Activated naive CD4-positive, alpha-beta T cell treated with anti-CD3 and anti-CD28 coated beads for 36 hours (primary cell): ENCODE measurements at regions of chr12 and their contacts with region 1.

Region 1: GRCh38 chr12:76083904-76084862 is at the start of gene NAP1L1:
- DNase-seq: peak; percentile 97
- H3K4me3 Mint-ChIP-seq: peak within 1 kb of the TSS; percentile 94
- H3K27ac Mint-ChIP-seq: peak within 1 kb of the TSS; percentile 98
- H3K4me1 Mint-ChIP-seq: peaks cover 47% of the 10 kb centered on the region
- H3K27me3 Mint-ChIP-seq: no peaks in the 10 kb centered on the region
- total RNA-seq, gene NAP1L1: 1,078 to 1,092 TPM

Region 2: GRCh38 chr12:74537707-74538385 is 1546.3 kb before region 1 on chr12 and contains the start of gene ATXN7L3B:
- CTCF ChIA-PET with region 1: no interaction called
- intact Hi-C with region 1: loop called (anchors 5 kb)
- DNase-seq: peak; percentile 94
- H3K4me3 Mint-ChIP-seq: peak within 1 kb of the TSS; percentile 91
- H3K27ac Mint-ChIP-seq: peak within 1 kb of the TSS; percentile 97
- H3K4me1 Mint-ChIP-seq: peaks cover 48% of the 10 kb centered on the region
- H3K27me3 Mint-ChIP-seq: no peaks in the 10 kb centered on the region
- total RNA-seq, gene ATXN7L3B: 19.8 to 19.9 TPM

Region 3: GRCh38 chr12:75944097-75944904 is 139.9 kb before region 1 on chr12:
- CTCF ChIA-PET with region 1: no interaction called
- intact Hi-C with region 1: loop called (anchors 2 kb)
- DNase-seq: peak; percentile 44
- H3K4me3 Mint-ChIP-seq: no peak overlapping the region
- H3K27ac Mint-ChIP-seq: peak overlapping the region; percentile 87
- H3K4me1 Mint-ChIP-seq: peaks cover 22% of the 10 kb centered on the region
- H3K27me3 Mint-ChIP-seq: no peaks in the 10 kb centered on the region

Region 4: DNA sequence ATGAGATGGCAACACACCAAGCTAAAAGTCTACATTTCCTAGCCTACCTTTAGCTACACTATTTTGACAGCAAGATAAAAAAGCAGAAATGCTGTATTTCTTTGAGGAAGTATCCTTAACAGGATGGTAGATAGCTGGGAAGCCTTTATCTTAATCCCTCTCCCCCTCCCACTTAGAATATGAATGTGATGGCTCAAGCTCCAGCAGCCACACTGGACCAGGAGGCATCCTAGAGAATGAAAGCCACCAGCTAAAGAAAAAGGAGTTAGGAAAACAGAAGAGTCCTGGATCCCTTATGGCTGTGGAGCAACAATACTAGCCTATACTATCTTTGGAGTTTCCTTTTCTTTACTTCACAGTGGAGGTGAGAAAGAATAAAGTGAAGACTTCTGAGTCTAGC is 14.8 kb before region 1 on chr12:
- CTCF ChIA-PET with region 1: interaction called, 4 read pairs
- intact Hi-C with region 1: loop called (anchors 1 kb)
- DNase-seq: no peak
- H3K4me3 Mint-ChIP-seq: no peak overlapping the region
- H3K27ac Mint-ChIP-seq: peak overlapping the region; percentile 7
- H3K4me1 Mint-ChIP-seq: peaks cover 57% of the 10 kb centered on the region
- H3K27me3 Mint-ChIP-seq: no peaks in the 10 kb centered on the region

Region 5: DNA sequence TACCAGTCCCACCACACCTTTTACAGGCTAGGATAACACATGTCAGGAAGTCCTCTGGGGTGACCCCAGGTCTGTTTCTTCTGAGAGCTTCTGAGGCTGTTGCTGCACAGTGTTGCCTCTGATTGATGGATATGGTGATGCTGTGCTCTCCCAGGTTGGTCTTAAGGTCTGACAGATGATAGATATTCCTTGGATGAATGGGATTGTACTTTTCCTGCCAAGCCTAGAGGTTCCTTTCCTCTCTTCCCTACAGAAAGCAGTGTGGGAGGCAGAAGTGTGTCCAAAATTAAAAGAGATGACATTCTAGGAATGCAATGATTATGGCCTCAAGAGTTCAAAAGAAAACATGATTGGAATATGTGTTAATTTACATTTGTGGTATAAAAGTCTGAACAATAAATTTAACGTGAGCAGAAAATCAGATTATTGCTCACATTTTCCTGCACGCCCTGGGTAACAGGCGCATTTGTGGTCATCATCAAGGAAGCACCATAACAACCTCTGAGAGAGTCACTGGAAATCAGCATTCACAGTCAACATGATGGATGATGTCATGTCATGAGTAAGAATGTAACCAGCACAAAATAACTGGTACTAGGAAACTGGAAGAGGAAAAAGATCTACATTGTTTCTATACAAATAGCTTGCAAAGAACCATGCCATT is 190.4 kb after region 1 on chr12:
- CTCF ChIA-PET with region 1: no interaction called
- intact Hi-C with region 1: loop called (anchors 1 kb)
- DNase-seq: peak; percentile 58
- H3K4me3 Mint-ChIP-seq: no peak overlapping the region
- H3K27ac Mint-ChIP-seq: peak overlapping the region; percentile 10
- H3K4me1 Mint-ChIP-seq: peaks cover 12% of the 10 kb centered on the region
- H3K27me3 Mint-ChIP-seq: peaks cover 11% of the 10 kb centered on the region

Region 6: GRCh38 chr12:76586764-76587395 is 502.7 kb after region 1 on chr12:
- CTCF ChIA-PET with region 1: no interaction called
- intact Hi-C with region 1: loop called (anchors 2 kb)
- DNase-seq: peak; percentile 56
- H3K4me3 Mint-ChIP-seq: no peak overlapping the region
- H3K27ac Mint-ChIP-seq: no peak overlapping the region
- H3K4me1 Mint-ChIP-seq: no peaks in the 10 kb centered on the region
- H3K27me3 Mint-ChIP-seq: no peaks in the 10 kb centered on the region